ENCODE measurements at regions of chr3 and their contacts with region 1.

Region 1: DNA sequence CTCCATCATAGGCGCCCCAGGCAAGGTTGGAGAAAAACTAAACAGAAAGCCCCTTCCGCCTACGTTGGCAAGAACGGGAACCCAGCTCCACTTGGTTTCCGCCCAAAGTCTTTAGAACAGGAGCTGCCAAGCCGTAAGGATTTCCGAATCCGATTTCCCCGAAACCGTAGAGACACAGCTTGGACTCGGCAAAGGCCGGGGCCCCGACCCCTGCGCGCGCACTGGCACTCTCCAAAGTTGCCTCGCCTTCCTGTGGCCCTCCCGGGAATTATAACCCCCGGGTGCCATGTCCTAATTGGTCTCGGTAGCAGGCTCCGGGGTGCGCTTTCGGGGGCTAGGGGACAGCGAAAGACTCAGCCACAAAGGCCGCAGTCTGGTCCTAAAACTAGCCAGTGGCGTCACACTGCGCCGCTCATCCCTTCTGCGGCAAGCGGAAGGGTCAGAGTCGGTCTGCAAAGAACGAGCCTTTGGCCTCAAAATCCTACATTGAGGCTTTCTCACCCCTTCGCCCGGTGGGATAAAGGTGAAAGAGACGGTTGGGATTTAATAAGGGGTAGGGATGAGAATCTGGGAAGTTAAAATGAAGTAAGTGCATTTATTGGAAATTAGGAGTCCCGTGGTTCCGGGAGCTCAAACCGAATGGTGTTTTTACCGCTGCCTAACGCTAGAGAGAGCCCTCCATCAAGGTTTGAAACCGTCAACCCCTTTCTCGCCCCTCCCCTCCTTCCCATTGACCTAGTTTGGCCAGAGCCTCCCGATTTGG is 6.8 kb downstream of the BCL6 start:
- DNase-seq: peak; percentile 94
- H3K4me3 ChIP-seq: peak overlapping the region; percentile 78 to 87
- H3K27ac ChIP-seq: peak overlapping the region; percentile 97
- H3K4me1 ChIP-seq: peaks cover 31% of the 10 kb centered on the region
- H3K27me3 ChIP-seq: no peaks in the 10 kb centered on the region
- CTCF ChIP-seq: peak; percentile 35 to 75 (median 61)
- POLR2A ChIP-seq: no peak

Region 2: GRCh38 chr3:187694801-187695200 is 43.7 kb before region 1 on chr3:
- intact Hi-C with region 1: no loop called
- DNase-seq: no peak
- H3K4me3 ChIP-seq: no peak overlapping the region
- H3K27ac ChIP-seq: no peak overlapping the region
- H3K4me1 ChIP-seq: no peaks in the 10 kb centered on the region
- H3K27me3 ChIP-seq: no peaks in the 10 kb centered on the region
- CTCF ChIP-seq: no peak
- POLR2A ChIP-seq: no peak

Region 3: DNA sequence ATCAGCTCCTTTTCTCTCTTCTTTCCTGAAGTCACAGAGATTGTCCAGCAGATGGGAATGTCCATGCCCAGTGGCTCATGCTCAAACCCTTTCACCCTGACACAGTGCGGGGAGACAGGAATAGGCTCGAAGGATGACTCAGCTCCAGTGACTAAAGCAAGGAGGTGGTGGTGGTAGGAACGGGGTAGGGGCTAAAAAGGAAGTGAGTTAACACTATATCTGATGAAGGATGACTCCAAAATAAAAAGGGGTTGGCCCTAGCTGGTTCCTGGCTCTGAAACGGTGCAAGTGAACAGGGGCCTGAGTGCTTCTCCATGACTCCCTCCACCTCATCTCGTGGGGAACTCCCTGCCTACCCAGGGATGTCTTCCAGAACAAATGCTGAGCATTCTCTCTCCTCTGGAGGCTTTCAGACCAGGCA is 248.0 kb after region 1 on chr3:
- intact Hi-C with region 1: no loop called
- DNase-seq: no peak
- H3K4me3 ChIP-seq: no peak overlapping the region
- H3K27ac ChIP-seq: no peak overlapping the region
- H3K4me1 ChIP-seq: peaks cover 8% of the 10 kb centered on the region
- H3K27me3 ChIP-seq: no peaks in the 10 kb centered on the region
- CTCF ChIP-seq: no peak
- POLR2A ChIP-seq: no peak

Region 4: GRCh38 chr3:188052169-188053030 is 313.9 kb after region 1 on chr3:
- intact Hi-C with region 1: loop called (anchors 5 kb)
- DNase-seq: peak; percentile 98
- H3K4me3 ChIP-seq: no peak overlapping the region
- H3K27ac ChIP-seq: peak overlapping the region; percentile 84 to 89
- H3K4me1 ChIP-seq: peaks cover 36% of the 10 kb centered on the region
- H3K27me3 ChIP-seq: no peaks in the 10 kb centered on the region
- CTCF ChIP-seq: peak; percentile 53 to 83 (median 80)
- POLR2A ChIP-seq: no peak

Region 5: DNA sequence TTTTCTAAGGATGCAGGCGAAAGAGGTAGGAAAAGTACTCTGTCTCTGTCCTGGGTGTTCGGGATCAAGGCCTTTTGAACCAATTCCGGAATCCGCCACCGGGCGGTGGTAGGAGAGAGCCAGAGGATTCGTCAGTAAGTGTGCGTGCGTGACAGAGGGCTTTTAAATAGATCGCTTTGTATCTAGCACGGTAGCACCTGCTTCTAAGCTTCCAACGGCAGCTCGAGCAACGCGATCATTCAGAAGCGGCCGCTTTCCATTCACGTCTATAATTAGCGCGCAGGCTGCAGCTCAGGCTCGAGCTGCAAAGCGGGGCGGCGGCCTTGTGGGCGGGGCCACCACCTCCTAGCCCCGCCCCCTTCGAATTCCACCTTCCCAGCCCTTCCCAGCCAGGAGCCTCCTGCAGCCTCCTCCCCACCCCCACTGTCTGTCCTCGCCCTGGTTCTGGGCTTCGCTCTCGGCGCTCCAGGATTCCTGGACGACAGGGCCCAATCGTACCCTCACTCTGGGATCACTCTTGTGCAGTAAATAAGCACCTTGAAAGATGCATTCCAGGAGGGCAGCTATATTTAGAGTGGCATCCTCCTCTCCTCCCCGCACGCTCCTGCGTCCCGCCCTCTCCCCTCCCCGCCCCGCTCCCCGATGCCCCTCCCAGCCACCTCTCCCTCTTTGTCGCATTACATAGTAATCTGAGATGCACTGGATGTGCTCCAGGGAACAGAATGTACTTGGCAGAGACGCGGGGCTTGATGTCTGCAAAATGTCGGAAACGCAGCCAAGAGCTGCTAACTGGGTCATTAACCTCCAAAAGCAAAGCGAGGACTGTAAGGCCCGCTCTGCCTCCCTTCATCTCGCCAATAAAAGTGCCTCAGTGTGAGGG is 1209.1 kb after region 1 on chr3:
- intact Hi-C with region 1: loop called (anchors 2 kb)
- DNase-seq: peak; percentile 98
- H3K4me3 ChIP-seq: peak overlapping the region; percentile 36 to 44
- H3K27ac ChIP-seq: peak overlapping the region; percentile 91 to 92
- H3K4me1 ChIP-seq: peaks cover 41% of the 10 kb centered on the region
- H3K27me3 ChIP-seq: no peaks in the 10 kb centered on the region
- CTCF ChIP-seq: peak; percentile 13 to 39 (median 27)
- POLR2A ChIP-seq: no peak

Measured in testis (tissue), 5 donors.